Activated CD8-positive, alpha-beta T cell treated with anti-CD3 and anti-CD28 coated beads, Interleukin-2, amount 10 ng/mL, durations not matched to agents 7 days and 5 days (primary cell): ENCODE measurements at regions of chr1 and their contacts with region 1.

Region 1: GRCh38 chr1:15835741-15836510 is 11.6 kb upstream of the SPEN start:
- DNase-seq: peak; percentile 99
- ATAC-seq: peak; percentile 61
- H3K4me3 Mint-ChIP-seq: peak overlapping the region; percentile 87
- H3K27ac Mint-ChIP-seq: peak overlapping the region; percentile 98
- H3K4me1 Mint-ChIP-seq: peaks cover 33% of the 10 kb centered on the region
- H3K27me3 Mint-ChIP-seq: no peaks in the 10 kb centered on the region

Region 2: GRCh38 chr1:15825800-15826199 is 10.1 kb before region 1 on chr1:
- CTCF ChIA-PET with region 1: interaction called, 7 read pairs
- POLR2A ChIA-PET with region 1: interaction called, 26 read pairs
- DNase-seq: no peak
- ATAC-seq: no peak
- H3K4me3 Mint-ChIP-seq: no peak overlapping the region
- H3K27ac Mint-ChIP-seq: no peak overlapping the region
- H3K4me1 Mint-ChIP-seq: peaks cover 15% of the 10 kb centered on the region
- H3K27me3 Mint-ChIP-seq: no peaks in the 10 kb centered on the region

Region 3: GRCh38 chr1:15847100-15847892 is 11.4 kb after region 1 on chr1 and contains the start of gene SPEN:
- CTCF ChIA-PET with region 1: interaction called, 13 read pairs
- POLR2A ChIA-PET with region 1: interaction called, 98 read pairs
- DNase-seq: peak; percentile 98
- ATAC-seq: peak; percentile 86
- H3K4me3 Mint-ChIP-seq: peak within 1 kb of the TSS; percentile 95
- H3K27ac Mint-ChIP-seq: peak within 1 kb of the TSS; percentile 97
- H3K4me1 Mint-ChIP-seq: peaks cover 47% of the 10 kb centered on the region
- H3K27me3 Mint-ChIP-seq: no peaks in the 10 kb centered on the region
- total RNA-seq, gene SPEN: 65.0 to 66.3 TPM

Region 4: DNA sequence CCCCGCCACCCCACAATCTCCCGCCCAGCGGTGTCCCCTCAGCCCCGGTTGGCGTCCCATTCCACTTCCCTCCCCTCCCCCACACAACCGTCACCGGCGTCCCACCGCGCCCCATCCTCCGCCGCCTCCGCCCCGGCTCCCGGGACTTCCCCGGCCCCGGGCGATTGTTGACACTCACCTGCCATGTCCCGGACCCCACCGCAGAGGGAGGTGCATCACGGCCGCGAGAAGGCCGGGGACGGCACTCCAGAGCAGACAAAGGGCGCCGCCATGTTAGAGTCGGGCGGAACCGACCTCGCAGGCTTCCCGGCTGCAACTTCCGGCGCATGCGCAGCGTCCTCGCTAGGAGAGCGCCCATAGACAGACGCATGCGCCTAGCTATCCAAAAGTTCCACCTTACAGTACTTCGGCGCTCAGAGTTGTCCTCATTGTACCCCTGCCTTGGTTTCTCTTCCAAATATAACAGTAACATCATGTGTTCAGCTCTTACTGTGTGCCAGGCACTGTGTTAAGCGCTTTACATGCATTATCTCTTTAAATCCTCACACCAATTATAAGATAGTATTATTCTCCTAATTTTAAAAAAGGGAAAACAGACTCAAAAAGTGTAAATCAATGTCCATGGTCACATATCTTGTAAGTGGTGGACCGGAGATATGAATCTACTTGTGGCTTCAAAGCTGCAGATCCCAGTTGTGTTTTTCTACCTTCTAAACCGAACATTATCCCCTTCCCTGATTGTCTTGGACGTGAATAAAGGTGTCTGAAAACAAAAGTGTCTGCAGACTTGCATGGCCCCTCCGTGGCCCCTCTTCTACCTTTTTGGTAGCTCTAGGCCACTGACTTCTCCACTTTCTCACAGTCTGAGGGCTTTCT is 140.1 kb after region 1 on chr1 and contains the start of gene ZBTB17:
- CTCF ChIA-PET with region 1: interaction called, 10 read pairs
- POLR2A ChIA-PET with region 1: interaction called, 7 read pairs
- DNase-seq: peak; percentile 96
- ATAC-seq: peak; percentile 94
- H3K4me3 Mint-ChIP-seq: peak within 1 kb of the TSS; percentile 88
- H3K27ac Mint-ChIP-seq: peak within 1 kb of the TSS; percentile 80
- H3K4me1 Mint-ChIP-seq: peaks cover 30% of the 10 kb centered on the region
- H3K27me3 Mint-ChIP-seq: no peaks in the 10 kb centered on the region
- total RNA-seq, gene ZBTB17: 32.3 to 33.3 TPM